ENCODE measurements at regions of chr11 and their contacts with region 1.

Region 1: DNA sequence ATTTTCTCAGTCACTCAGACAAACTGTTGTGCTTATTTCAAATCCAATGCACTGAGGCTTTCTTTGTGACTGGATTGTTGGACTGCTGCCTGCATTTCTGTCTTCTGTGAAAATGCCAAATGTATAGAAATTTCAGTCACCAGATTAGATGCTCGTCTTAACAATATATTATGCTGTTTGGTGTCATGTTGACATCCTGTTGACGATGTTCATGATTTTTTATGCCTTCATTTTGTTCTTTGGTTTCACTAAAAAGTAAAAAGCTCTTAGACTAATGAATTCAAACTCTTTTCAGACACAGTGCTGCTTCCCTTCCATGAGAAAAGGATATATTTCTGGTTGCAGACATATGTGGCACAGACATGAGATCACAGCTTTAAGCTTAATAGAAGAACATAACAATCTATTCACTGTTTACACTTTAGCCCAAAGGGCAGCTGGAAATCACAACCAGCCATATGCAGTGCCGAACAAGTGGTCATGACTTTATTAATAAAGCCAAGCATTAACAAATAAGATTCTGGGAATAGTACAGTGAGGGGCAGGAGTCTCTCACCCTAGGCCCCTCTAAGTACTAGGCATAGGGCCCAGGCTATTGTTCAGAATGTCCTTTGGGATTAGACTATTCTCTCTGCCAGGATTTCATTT is 9.4 kb upstream of the SOX6 start:
- DNase-seq: no peak
- ATAC-seq: no peak
- H3K4me3 ChIP-seq: no peak overlapping the region
- H3K27ac ChIP-seq: no peak overlapping the region
- H3K4me1 ChIP-seq: peaks cover 0 to 43% of the 10 kb centered on the region in 2 experiments; a peak in 3 of 5 replicates
- H3K27me3 ChIP-seq: no peaks in the 10 kb centered on the region
- CTCF ChIP-seq: no peak
- EP300 ChIP-seq: no peak
- POLR2A ChIP-seq: no peak
- RAD21 ChIP-seq: no peak

Region 2: DNA sequence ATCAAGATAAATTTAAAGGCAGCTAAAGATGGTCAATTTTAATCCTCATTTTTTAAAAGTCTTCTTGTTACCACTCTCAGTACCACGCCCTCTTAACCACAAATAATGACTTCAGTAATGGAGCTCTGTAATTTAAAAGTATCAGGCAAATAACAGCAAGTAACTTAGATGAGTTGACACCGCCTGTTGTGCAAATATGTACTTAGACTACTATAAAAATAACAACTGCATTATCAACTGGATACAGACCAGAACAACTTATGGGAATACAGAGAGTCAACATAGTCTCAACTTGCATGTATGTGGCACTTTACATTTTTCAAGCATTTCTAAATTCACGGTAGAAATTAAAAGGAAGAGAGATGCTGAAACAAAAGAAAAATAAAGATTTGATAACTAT is 122.0 kb after region 1 on chr11:
- CTCF ChIA-PET with region 1: no interaction called
- POLR2A ChIA-PET with region 1: no interaction called
- in situ Hi-C with region 1: no loop called
- intact Hi-C with region 1: no loop called
- DNase-seq: no peak
- ATAC-seq: no peak
- H3K4me3 ChIP-seq: no peak overlapping the region
- H3K27ac ChIP-seq: no peak overlapping the region
- H3K4me1 ChIP-seq: peaks cover 0 to 5% of the 10 kb centered on the region in 2 experiments; a peak in 1 of 5 replicates
- H3K27me3 ChIP-seq: no peaks in the 10 kb centered on the region
- CTCF ChIP-seq: no peak
- EP300 ChIP-seq: no peak
- POLR2A ChIP-seq: no peak
- RAD21 ChIP-seq: no peak

Region 3: GRCh38 chr11:16596231-16596630 is 230.5 kb after region 1 on chr11:
- CTCF ChIA-PET with region 1: no interaction called
- POLR2A ChIA-PET with region 1: no interaction called
- in situ Hi-C with region 1: loop called (anchors 10 kb)
- intact Hi-C with region 1: no loop called
- DNase-seq: peak in 2 of 4 experiments; percentile 39 to 70
- ATAC-seq: peak; percentile 88
- H3K4me3 ChIP-seq: no peak overlapping the region
- H3K27ac ChIP-seq: peak overlapping the region; percentile 65
- H3K4me1 ChIP-seq: peaks cover 2 to 4% of the 10 kb centered on the region in 2 experiments; a peak in 3 of 5 replicates
- H3K27me3 ChIP-seq: no peaks in the 10 kb centered on the region
- CTCF ChIP-seq: no peak
- EP300 ChIP-seq: 0 out of 2 replicates have a peak, but pooled peaks have one; percentile 1
- POLR2A ChIP-seq: no peak
- RAD21 ChIP-seq: no peak

Region 4: DNA sequence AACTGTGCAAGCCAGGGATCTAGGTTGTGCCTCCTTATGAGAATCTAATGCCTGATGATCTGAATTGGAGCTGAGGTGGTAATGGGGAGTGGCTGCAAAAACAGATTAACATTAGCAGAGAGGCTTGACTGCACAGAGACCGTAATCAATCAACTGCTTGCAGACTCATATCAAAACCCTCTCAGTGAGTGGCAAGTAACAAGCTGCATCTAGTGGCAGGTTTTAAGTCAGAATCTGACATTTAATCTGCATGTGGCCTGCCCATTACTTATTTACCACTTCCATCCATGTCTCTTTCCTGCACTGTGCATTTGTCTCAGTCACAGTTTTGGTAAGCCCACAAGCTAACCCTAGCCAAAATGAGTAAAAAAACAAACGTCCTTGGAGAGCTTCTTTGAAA is 384.0 kb after region 1 on chr11:
- CTCF ChIA-PET with region 1: no interaction called
- POLR2A ChIA-PET with region 1: no interaction called
- in situ Hi-C with region 1: no loop called
- intact Hi-C with region 1: no loop called
- DNase-seq: no peak
- ATAC-seq: no peak
- H3K4me3 ChIP-seq: no peak overlapping the region
- H3K27ac ChIP-seq: no peak overlapping the region
- H3K4me1 ChIP-seq: no peaks in the 10 kb centered on the region; a peak in 1 of 5 replicates
- H3K27me3 ChIP-seq: no peaks in the 10 kb centered on the region
- CTCF ChIP-seq: no peak
- EP300 ChIP-seq: no peak
- POLR2A ChIP-seq: no peak
- RAD21 ChIP-seq: no peak

Measured in K562 (cell line).